ENCODE measurements at regions of chr15 and their contacts with region 1.

Region 1: GRCh38 chr15:64905119-64905831 is 6.4 kb upstream of the ANKDD1A start:
- DNase-seq: peak; percentile 86
- ATAC-seq: peak; percentile 87
- H3K4me3 Mint-ChIP-seq: peak overlapping the region; percentile 66
- H3K27ac Mint-ChIP-seq: peak overlapping the region; percentile 56
- H3K4me1 Mint-ChIP-seq: peaks cover 39% of the 10 kb centered on the region
- H3K27me3 Mint-ChIP-seq: peaks cover 7% of the 10 kb centered on the region

Region 2: GRCh38 chr15:64809649-64810496 is 95.4 kb before region 1 on chr15:
- CTCF ChIA-PET with region 1: interaction called, 17 read pairs
- DNase-seq: peak; percentile 83
- ATAC-seq: peak; percentile 79
- H3K4me3 Mint-ChIP-seq: no peak overlapping the region
- H3K27ac Mint-ChIP-seq: no peak overlapping the region
- H3K4me1 Mint-ChIP-seq: peaks cover 2% of the 10 kb centered on the region
- H3K27me3 Mint-ChIP-seq: peaks cover 3% of the 10 kb centered on the region

Region 3: GRCh38 chr15:64865998-64866520 is 39.2 kb before region 1 on chr15:
- CTCF ChIA-PET with region 1: no interaction called
- DNase-seq: no peak
- ATAC-seq: no peak
- H3K4me3 Mint-ChIP-seq: no peak overlapping the region
- H3K27ac Mint-ChIP-seq: no peak overlapping the region
- H3K4me1 Mint-ChIP-seq: peaks cover 9% of the 10 kb centered on the region
- H3K27me3 Mint-ChIP-seq: no peaks in the 10 kb centered on the region

Region 4: DNA sequence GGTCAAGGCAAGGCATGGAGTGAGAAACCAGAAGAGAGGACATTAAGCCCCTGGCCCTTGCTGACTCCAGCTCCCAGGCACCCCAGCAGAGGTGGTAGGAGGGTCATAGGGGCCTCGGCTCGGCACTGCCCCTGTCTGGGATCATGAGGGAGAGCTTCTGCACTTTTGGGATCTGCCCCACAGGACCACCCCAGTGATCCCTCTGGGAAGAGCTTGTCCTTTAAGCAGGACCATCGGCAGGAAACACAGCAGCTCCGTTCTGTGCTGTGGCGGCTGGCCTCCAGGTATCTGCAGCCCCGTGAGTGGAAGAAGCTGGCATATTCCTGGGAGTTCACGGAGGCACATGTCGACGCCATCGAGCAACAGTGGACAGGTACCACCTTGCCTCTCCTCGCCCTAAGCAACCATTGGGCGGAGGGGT is 42.0 kb after region 1 on chr15:
- CTCF ChIA-PET with region 1: no interaction called
- DNase-seq: no peak
- ATAC-seq: no peak
- H3K4me3 Mint-ChIP-seq: no peak overlapping the region
- H3K27ac Mint-ChIP-seq: no peak overlapping the region
- H3K4me1 Mint-ChIP-seq: no peaks in the 10 kb centered on the region
- H3K27me3 Mint-ChIP-seq: no peaks in the 10 kb centered on the region

Measured in activated CD8-positive, alpha-beta memory T cell treated with anti-CD3 and anti-CD28 coated beads, Interleukin-2, amount 10 ng/mL, durations not matched to agents 7 days and 5 days (primary cell).